MCF 10A (cell line): ENCODE measurements at regions of chr17 and their contacts with region 1.

Region 1: DNA sequence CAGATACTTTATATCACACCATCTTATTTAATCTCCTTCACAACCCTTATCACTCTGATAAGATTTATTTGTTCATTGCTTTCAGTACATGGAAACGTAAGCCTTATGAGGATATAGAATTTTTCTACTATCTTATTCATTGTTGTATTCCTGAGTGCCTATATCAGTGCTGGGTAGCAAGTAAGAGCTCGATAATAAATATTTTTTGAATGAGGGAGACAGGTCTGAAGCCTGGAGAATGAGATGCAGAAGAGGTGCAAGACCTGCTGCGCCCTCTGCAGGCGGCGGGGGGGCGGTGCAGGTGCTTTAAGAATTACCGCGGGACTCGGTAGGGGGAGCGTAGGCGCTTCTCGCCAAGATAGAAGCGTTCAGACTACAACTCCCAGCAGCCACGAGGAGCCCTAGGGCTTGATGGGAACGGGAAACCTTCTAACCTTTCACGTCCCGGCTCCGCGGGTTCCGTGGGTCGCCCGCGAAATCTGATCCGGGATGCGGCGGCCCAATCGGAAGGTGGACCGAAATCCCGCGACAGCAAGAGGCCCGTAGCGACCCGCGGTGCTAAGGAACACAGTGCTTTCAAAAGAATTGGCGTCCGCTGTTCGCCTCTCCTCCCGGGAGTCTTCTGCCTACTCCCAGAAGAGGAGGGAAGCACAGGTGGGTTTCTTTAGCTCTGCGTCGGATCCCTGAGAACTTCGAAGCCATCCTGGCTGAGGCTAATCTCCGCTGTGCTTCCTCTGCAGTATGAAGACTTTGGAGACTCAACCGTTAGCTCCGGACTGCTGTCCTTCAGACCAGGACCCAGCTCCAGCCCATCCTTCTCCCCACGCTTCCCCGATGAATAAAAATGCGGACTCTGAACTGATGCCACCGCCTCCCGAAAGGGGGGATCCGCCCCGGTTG is at the start of gene WRAP53:
- DNase-seq: peak; percentile 100
- H3K4me3 Mint-ChIP-seq: peak within 1 kb of the TSS; percentile 97
- H3K27ac Mint-ChIP-seq: peak within 1 kb of the TSS; percentile 100
- H3K4me1 Mint-ChIP-seq: peaks cover 22% of the 10 kb centered on the region
- H3K27me3 Mint-ChIP-seq: no peaks in the 10 kb centered on the region
- CTCF ChIP-seq: peak; percentile 97
- total RNA-seq, gene WRAP53: 10.7 and 11.7 TPM in 2 replicates

Region 2: GRCh38 chr17:7435221-7435675 is 252.9 kb before region 1 on chr17 and contains the start of gene TMEM102:
- CTCF ChIA-PET with region 1: no interaction called
- POLR2A ChIA-PET with region 1: interaction called, 40 read pairs
- intact Hi-C with region 1: loop called (anchors 10 kb)
- DNase-seq: peak; percentile 99
- H3K4me3 Mint-ChIP-seq: peak within 1 kb of the TSS; percentile 81
- H3K27ac Mint-ChIP-seq: peak within 1 kb of the TSS; percentile 92
- H3K4me1 Mint-ChIP-seq: peaks cover 12% of the 10 kb centered on the region
- H3K27me3 Mint-ChIP-seq: no peaks in the 10 kb centered on the region
- CTCF ChIP-seq: no peak
- total RNA-seq, gene TMEM102: 6.1 and 6.3 TPM in 2 replicates

Region 3: DNA sequence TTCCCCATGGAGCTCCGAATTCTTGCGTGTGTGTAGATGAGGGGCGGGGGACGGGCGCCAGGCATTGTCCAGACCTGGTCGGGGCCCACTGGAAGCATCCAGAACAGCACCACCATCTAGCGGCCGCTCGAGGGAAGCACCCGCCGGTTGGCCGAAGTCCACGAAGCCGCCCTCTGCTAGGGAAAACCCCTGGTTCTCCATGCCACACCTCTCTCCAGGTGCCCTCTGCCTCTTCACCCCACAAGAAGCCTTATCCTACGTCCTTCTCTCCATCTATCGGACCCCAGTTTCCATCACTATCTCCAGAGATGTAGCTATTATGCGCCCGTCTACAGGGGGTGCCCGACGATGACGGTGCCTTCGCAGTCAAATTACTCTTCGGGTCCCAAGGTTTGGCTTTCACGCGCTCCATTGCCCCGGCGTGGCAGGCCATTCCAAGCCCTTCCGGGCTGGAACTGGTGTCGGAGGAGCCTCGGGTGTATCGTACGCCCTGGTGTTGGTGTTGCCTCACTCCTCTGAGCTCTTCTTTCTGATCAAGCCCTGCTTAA is 127.1 kb before region 1 on chr17:
- CTCF ChIA-PET with region 1: interaction called, 7 read pairs
- POLR2A ChIA-PET with region 1: interaction called, 49 read pairs
- intact Hi-C with region 1: no loop called
- DNase-seq: peak; percentile 92
- H3K4me3 Mint-ChIP-seq: peak overlapping the region; percentile 81
- H3K27ac Mint-ChIP-seq: peak overlapping the region; percentile 91
- H3K4me1 Mint-ChIP-seq: peaks cover 42% of the 10 kb centered on the region
- H3K27me3 Mint-ChIP-seq: no peaks in the 10 kb centered on the region
- CTCF ChIP-seq: peak; percentile 88

Region 4: DNA sequence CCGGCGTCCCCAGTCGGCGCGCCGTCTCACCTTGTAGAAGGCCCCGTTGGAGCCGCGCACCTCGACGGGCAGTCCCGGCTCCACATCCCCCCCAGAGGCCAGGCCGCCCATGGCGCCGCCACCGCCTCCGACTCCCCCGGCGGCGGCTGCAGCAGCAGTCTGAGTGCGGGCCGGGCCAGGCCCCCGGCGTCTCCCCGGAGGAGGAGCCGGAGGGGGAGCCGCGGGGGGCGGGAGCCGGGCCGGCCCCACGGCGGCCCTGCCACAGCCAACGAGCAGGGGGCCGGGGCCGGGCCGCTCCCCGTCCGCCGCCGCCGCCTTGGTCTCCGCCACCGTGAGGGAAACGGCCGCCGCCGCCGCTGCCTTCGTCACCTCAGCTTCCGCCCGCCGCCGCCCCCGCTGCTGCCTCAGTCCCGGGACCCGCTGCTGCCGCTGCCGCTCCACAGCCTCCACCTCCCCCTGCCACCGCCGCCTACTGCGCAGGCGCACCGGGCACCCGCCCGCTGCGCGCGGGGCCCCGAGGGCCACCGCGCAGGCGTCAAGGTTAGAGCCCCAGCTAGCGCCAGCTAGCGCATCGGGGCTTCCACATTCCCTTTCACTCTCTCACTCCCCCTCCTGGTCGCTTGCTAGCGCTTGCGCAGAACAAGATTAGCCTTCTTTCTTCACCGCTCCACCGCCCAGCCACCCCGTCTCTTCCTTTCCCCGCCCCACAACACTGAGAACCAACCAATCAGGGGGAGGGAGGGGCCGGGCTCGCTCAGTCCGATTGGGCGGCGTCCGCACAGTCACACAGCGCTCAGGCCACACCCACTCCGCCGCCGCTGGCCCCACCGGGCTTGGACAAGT is 73.5 kb before region 1 on chr17 and contains the start of gene FXR2:
- CTCF ChIA-PET with region 1: interaction called, 13 read pairs
- POLR2A ChIA-PET with region 1: interaction called, 139 read pairs
- intact Hi-C with region 1: no loop called
- DNase-seq: peak; percentile 99
- H3K4me3 Mint-ChIP-seq: peak within 1 kb of the TSS; percentile 80
- H3K27ac Mint-ChIP-seq: peak within 1 kb of the TSS; percentile 95
- H3K4me1 Mint-ChIP-seq: peaks cover 32% of the 10 kb centered on the region
- H3K27me3 Mint-ChIP-seq: no peaks in the 10 kb centered on the region
- CTCF ChIP-seq: peak; percentile 37
- total RNA-seq, gene FXR2: 60.7 and 65.1 TPM in 2 replicates

Region 5: GRCh38 chr17:7716901-7717755 is 29.0 kb after region 1 on chr17 and contains the start of gene DNAH2:
- CTCF ChIA-PET with region 1: interaction called, 38 read pairs
- POLR2A ChIA-PET with region 1: interaction called, 45 read pairs
- intact Hi-C with region 1: no loop called
- DNase-seq: peak; percentile 88
- H3K4me3 Mint-ChIP-seq: peak within 1 kb of the TSS; percentile 78
- H3K27ac Mint-ChIP-seq: no peak within 1 kb of the TSS
- H3K4me1 Mint-ChIP-seq: peaks cover 9% of the 10 kb centered on the region
- H3K27me3 Mint-ChIP-seq: peaks cover 54% of the 10 kb centered on the region
- CTCF ChIP-seq: peak; percentile 42
- total RNA-seq, gene DNAH2: 0.05 and 0.12 TPM in 2 replicates

Region 6: GRCh38 chr17:7931709-7932482 is 243.7 kb after region 1 on chr17 and contains the starts of genes CNTROB and TRAPPC1:
- CTCF ChIA-PET with region 1: no interaction called
- POLR2A ChIA-PET with region 1: interaction called, 15 read pairs
- intact Hi-C with region 1: no loop called
- DNase-seq: peak; percentile 98
- H3K4me3 Mint-ChIP-seq: peak within 1 kb of the TSS; percentile 95
- H3K27ac Mint-ChIP-seq: peak within 1 kb of the TSS; percentile 96
- H3K4me1 Mint-ChIP-seq: peaks cover 22% of the 10 kb centered on the region
- H3K27me3 Mint-ChIP-seq: no peaks in the 10 kb centered on the region
- CTCF ChIP-seq: no peak
- total RNA-seq, gene CNTROB: 31.5 and 39.2 TPM in 2 replicates
- total RNA-seq, gene TRAPPC1: 80.0 and 104 TPM in 2 replicates